Activated naive CD8-positive, alpha-beta T cell treated with anti-CD3 and anti-CD28 coated beads, Interleukin-2, amount 10 ng/mL, durations not matched to agents 7 days and 5 days (primary cell): ENCODE measurements at regions of chr2 and their contacts with region 1.

Region 1: GRCh38 chr2:234288974-234289455 is 207.9 kb downstream of the ARL4C start:
- DNase-seq: peak; percentile 75
- ATAC-seq: no peak
- H3K4me3 Mint-ChIP-seq: peak overlapping the region; percentile 74
- H3K27ac Mint-ChIP-seq: peak overlapping the region; percentile 97
- H3K4me1 Mint-ChIP-seq: peaks cover 70% of the 10 kb centered on the region
- H3K27me3 Mint-ChIP-seq: no peaks in the 10 kb centered on the region

Region 2: GRCh38 chr2:234156326-234156725 is 132.7 kb before region 1 on chr2:
- POLR2A ChIA-PET with region 1: no interaction called
- DNase-seq: no peak
- ATAC-seq: no peak
- H3K4me3 Mint-ChIP-seq: no peak overlapping the region
- H3K27ac Mint-ChIP-seq: no peak overlapping the region
- H3K4me1 Mint-ChIP-seq: peaks cover 5% of the 10 kb centered on the region
- H3K27me3 Mint-ChIP-seq: peaks cover 7% of the 10 kb centered on the region

Region 3: GRCh38 chr2:234368861-234369261 is 79.8 kb after region 1 on chr2:
- POLR2A ChIA-PET with region 1: interaction called, 34 read pairs
- DNase-seq: peak; percentile 53
- ATAC-seq: peak; percentile 84
- H3K4me3 Mint-ChIP-seq: peak overlapping the region; percentile 63
- H3K27ac Mint-ChIP-seq: peak overlapping the region; percentile 92
- H3K4me1 Mint-ChIP-seq: peaks cover 70% of the 10 kb centered on the region
- H3K27me3 Mint-ChIP-seq: no peaks in the 10 kb centered on the region

Region 4: GRCh38 chr2:234425619-234426603 is 136.9 kb after region 1 on chr2:
- POLR2A ChIA-PET with region 1: interaction called, 64 read pairs
- DNase-seq: peak; percentile 72
- ATAC-seq: peak; percentile 78
- H3K4me3 Mint-ChIP-seq: peak overlapping the region; percentile 83
- H3K27ac Mint-ChIP-seq: peak overlapping the region; percentile 100
- H3K4me1 Mint-ChIP-seq: peaks cover 75% of the 10 kb centered on the region
- H3K27me3 Mint-ChIP-seq: no peaks in the 10 kb centered on the region

Region 5: DNA sequence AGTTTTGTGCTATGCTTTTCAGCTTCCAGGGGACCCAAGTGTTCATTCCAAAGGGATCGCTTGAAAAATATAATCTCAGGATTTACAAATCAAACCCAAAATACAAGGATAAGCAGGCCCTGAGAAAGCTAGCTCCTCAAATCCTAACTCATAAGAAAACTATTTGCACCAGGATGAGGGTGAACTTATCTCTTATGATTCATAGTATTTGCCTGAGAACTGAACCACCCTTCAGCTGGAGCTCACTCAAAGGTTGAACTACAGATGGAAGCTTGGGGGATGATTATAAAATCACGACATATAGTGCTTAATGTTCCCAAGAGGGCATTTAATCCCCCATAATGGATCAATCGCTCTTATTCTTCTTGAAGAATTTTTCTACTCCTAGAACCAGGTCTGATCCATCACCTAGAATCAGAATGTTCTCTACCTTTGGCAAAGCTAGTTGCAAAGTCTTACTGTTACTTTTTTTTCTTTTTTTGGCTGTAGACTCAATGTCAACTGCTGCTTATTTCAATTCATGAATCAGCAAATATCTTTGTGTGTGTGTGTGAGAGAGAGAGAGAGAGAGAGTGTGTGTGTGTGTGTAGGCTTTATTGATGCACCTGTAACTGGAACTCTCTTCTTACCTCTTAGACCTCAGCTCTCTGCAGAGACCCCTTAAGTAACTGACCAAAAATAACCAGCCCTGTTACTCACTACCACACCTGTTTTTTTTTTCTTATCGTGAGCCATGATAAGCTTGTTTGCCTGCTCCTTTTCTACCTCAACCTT is 163.0 kb after region 1 on chr2:
- POLR2A ChIA-PET with region 1: interaction called, 165 read pairs
- DNase-seq: no peak
- ATAC-seq: peak; percentile 9
- H3K4me3 Mint-ChIP-seq: peak overlapping the region; percentile 91
- H3K27ac Mint-ChIP-seq: peak overlapping the region; percentile 90
- H3K4me1 Mint-ChIP-seq: peaks cover 72% of the 10 kb centered on the region
- H3K27me3 Mint-ChIP-seq: no peaks in the 10 kb centered on the region

Region 6: DNA sequence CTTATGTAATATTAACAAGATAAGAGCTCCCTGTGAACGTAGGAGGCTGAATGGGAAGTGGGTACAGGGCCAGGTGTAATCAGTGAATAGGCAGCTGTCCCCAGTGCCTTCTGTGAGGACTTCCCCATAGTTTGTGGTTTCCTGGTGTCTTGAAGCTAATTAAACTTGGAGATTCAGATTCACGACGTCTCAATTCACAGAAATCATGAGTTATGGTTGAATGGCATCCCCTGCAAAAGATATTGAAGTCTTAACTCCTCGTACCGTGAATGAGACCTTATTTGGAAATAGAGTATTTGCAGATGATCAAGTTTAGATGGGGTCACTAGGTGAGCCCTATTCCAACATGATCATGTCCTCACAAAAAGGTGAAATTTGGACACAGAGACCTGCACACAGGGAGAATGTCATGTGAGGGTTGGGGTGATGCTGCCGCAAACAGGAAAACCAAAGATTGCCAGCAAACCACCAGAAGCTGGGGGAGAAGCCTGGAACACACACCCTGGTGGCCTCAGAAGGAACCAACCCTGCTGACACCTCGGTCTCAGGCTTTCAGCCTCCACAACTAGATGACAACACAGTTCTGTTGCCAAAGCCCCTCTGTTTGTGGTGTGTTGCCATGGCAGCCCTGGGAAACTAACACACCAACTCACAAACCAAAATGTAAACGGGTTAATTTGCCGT is 194.7 kb after region 1 on chr2:
- POLR2A ChIA-PET with region 1: interaction called, 48 read pairs
- DNase-seq: peak; percentile 79
- ATAC-seq: peak; percentile 78
- H3K4me3 Mint-ChIP-seq: peak overlapping the region; percentile 72
- H3K27ac Mint-ChIP-seq: peak overlapping the region; percentile 85
- H3K4me1 Mint-ChIP-seq: peaks cover 57% of the 10 kb centered on the region
- H3K27me3 Mint-ChIP-seq: no peaks in the 10 kb centered on the region